Pancreas (tissue), 10 donors: ENCODE measurements at regions of chr10 and their contacts with region 1.

Region 1: DNA sequence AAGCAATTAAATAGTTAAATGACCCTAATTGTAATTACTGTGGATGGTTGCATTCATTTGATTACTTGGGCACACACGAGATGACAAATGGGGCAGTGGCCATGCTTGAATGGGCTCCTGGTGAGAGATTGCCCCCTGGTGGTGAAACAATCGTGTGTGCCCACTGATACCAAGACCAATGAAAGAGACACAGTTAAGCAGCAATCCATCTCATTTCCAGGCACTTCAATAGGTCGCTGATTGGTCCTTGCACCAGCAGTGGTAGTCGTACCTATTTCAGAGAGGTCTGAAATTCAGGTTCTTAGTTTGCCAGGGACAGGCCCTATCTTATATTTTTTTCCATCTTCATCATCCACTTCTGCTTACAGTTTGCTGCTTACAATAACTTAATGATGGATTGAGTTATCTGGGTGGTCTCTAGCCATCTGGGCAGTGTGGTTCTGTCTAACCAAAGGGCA is 8.3 kb downstream of the PCBD1 start:
- DNase-seq: peak; percentile 74 to 86 (median 75)
- ATAC-seq: peak; percentile 92 to 98 (median 95)
- H3K4me3 ChIP-seq: no peak overlapping the region
- H3K27ac ChIP-seq: no peak overlapping the region
- H3K4me1 ChIP-seq: no peaks in the 10 kb centered on the region
- H3K27me3 ChIP-seq: no peaks in the 10 kb centered on the region
- CTCF ChIP-seq: peak; percentile 86 to 92 (median 88)

Region 2: GRCh38 chr10:70549962-70550458 is 330.1 kb before region 1 on chr10:
- intact Hi-C with region 1: loop called in 1 of 3 experiments (anchors 5 kb)
- DNase-seq: peak in 5 of 6 donors; percentile 31 to 76 (median 61)
- ATAC-seq: peak; percentile 64 to 90 (median 88)
- H3K4me3 ChIP-seq: no peak overlapping the region
- H3K27ac ChIP-seq: no peak overlapping the region
- H3K4me1 ChIP-seq: no peaks in the 10 kb centered on the region
- H3K27me3 ChIP-seq: no peaks in the 10 kb centered on the region
- CTCF ChIP-seq: peak; percentile 76 to 86 (median 80)

Region 3: GRCh38 chr10:70561070-70561469 is 319.0 kb before region 1 on chr10:
- intact Hi-C with region 1: loop called in 1 of 3 experiments (anchors 5 kb)
- DNase-seq: no peak
- ATAC-seq: no peak
- H3K4me3 ChIP-seq: no peak overlapping the region
- H3K27ac ChIP-seq: no peak overlapping the region
- H3K4me1 ChIP-seq: no peaks in the 10 kb centered on the region
- H3K27me3 ChIP-seq: no peaks in the 10 kb centered on the region
- CTCF ChIP-seq: no peak

Region 4: GRCh38 chr10:70693619-70694335 is 186.3 kb before region 1 on chr10:
- intact Hi-C with region 1: no loop called
- DNase-seq: no peak
- ATAC-seq: peak in 3 of 4 donors; percentile 14 to 53 (median 18)
- H3K4me3 ChIP-seq: no peak overlapping the region
- H3K27ac ChIP-seq: no peak overlapping the region
- H3K4me1 ChIP-seq: no peaks in the 10 kb centered on the region
- H3K27me3 ChIP-seq: no peaks in the 10 kb centered on the region
- CTCF ChIP-seq: no peak

Region 5: GRCh38 chr10:70815504-70816219 is 64.4 kb before region 1 on chr10 and contains the start of gene SGPL1:
- intact Hi-C with region 1: loop called in 2 of 3 experiments (anchors 5 kb)
- DNase-seq: peak; percentile 76 to 97 (median 90)
- ATAC-seq: peak; percentile 92 to 97 (median 94)
- H3K4me3 ChIP-seq: peak within 1 kb of the TSS; percentile 63 to 74 (median 68)
- H3K27ac ChIP-seq: peak within 1 kb of the TSS; percentile 84 to 94 (median 90)
- H3K4me1 ChIP-seq: peaks cover 7 to 9% (median 8%) of the 10 kb centered on the region in 3 donors
- H3K27me3 ChIP-seq: no peaks in the 10 kb centered on the region
- CTCF ChIP-seq: peak; percentile 95 to 97 (median 96)
- total RNA-seq, gene SGPL1: 28.8 to 55.8 (median 34.8) TPM